ENCODE measurements at regions of chr11 and their contacts with region 1.

Region 1: GRCh38 chr11:128725630-128726319 is 31.9 kb downstream of the FLI1 start:
- DNase-seq: peak; percentile 65
- H3K4me3 Mint-ChIP-seq: peak overlapping the region; percentile 59
- H3K27ac Mint-ChIP-seq: peak overlapping the region; percentile 82
- H3K4me1 Mint-ChIP-seq: peaks cover 98% of the 10 kb centered on the region
- H3K27me3 Mint-ChIP-seq: no peaks in the 10 kb centered on the region

Region 2: DNA sequence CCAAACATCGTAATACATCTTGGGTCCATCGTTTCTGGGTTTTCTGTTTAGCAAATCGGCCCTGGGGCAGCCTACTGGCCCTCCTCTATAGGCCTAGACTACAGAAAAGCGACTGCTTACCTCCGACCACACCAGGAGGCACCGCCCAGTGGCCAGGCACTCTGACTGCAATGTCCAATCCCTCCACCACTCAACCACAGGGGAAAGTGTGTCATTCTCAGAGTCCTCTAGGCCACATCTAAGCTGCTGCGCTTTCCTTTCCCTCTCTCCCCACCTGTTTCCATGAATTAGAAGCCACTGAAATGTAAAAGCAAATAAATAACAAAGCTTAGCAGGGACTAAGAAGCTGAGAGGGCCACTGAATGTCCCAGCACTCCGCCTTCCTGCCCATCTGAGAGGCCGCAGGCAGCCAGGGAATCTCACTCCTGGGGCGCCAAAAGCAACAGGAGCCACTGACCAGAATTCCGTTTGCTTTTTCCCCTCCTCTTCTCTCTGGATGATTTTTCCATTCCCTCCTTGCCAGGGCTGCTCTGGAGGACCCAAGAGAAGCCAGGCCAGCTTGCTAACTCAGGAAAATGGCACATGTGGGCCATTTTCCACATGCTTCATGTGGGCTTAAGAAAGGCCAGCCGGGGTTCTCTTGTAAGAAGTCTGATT is 82.0 kb before region 1 on chr11:
- CTCF ChIA-PET with region 1: no interaction called
- POLR2A ChIA-PET with region 1: no interaction called
- intact Hi-C with region 1: no loop called
- DNase-seq: no peak
- H3K4me3 Mint-ChIP-seq: no peak overlapping the region
- H3K27ac Mint-ChIP-seq: no peak overlapping the region
- H3K4me1 Mint-ChIP-seq: peaks cover 4% of the 10 kb centered on the region
- H3K27me3 Mint-ChIP-seq: no peaks in the 10 kb centered on the region

Region 3: DNA sequence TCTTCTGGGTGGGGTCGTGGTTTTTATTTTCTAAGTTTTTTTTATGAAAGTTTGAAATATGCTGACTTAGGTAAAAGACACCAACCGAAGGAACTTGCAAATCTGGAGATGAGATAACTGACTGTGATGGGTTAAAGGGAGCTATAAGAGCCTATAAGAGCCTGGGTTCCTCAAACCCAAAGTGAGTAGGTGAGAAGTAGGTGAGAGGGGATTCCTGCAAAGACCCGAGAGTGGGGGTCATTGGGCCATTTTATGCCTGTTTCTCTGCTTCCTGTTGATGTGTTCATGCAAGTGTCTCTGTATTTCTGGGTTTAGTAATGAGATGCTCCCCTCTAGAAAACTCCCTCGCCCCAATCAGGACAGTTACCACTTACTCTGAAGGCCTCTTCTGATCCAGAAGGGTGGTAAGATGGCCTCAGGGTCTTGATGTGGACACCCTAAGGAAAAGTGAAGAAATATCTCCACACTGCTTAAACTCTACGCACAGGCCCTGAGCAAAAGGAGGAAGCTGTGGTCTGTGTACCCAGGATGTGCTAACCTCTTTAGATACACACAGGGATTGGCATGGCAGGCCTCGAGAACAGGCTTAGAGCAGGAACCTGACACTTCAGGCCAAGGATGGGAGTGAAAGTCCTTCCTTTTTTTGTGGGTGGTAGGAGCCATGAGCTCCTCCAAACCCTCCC is 30.1 kb before region 1 on chr11:
- CTCF ChIA-PET with region 1: interaction called, 3 read pairs
- POLR2A ChIA-PET with region 1: interaction called, 12 read pairs
- intact Hi-C with region 1: loop called (anchors 1 kb)
- DNase-seq: peak; percentile 55
- H3K4me3 Mint-ChIP-seq: peak overlapping the region; percentile 78
- H3K27ac Mint-ChIP-seq: peak overlapping the region; percentile 89
- H3K4me1 Mint-ChIP-seq: peaks cover 57% of the 10 kb centered on the region
- H3K27me3 Mint-ChIP-seq: peaks cover 5% of the 10 kb centered on the region

Measured in activated CD4-positive, alpha-beta memory T cell treated with anti-CD3 and anti-CD28 coated beads for 36 hours (primary cell).